ENCODE measurements at regions of chr2 and their contacts with region 1.

Region 1: DNA sequence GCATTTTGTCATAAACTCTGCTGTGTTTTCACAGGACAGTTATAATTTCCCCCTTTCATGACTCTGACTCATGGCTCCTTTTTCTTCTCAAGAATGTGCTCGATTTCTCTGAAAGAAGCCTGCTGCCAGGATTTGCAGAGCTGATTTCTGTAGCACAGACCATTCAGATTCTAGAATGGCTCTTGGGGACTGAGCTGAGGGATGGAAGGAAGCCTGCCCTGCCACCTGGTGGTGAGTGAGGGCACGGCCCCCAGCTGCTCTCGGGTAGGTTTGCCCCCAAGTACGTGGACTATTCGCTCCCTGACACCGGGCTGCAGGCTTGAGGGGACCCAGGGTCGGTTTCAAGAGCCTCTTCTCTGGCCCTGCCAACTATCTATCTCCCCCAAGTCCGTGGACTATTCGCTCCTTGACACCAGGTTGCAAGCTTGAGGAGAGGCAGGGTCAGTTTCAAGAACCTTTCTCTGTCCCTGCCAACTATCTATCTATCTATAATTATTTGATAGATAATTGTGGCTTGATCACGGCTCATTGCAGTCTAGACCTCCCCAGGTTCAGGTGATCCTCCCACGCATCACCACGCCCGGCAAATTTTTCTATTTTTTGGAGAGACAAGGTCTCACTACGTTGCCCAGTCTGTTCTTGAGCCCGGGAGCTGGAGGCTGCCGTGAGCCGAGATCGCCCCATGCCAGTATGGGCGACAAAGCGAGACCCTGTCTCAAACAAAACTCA is 1.4 kb upstream of the SMYD5 start:
- DNase-seq: peak; percentile 78
- ATAC-seq: peak; percentile 76
- H3K4me3 ChIP-seq: peak overlapping the region; percentile 50 to 93 (median 86)
- H3K27ac ChIP-seq: peak overlapping the region; percentile 92
- H3K4me1 ChIP-seq: peaks cover 72% of the 10 kb centered on the region
- H3K27me3 ChIP-seq: no peaks in the 10 kb centered on the region
- CTCF ChIP-seq: peak; percentile 98
- EP300 ChIP-seq: no peak
- POLR2A ChIP-seq: peak in 1 of 2 experiments; percentile 36; a peak in 1 of 4 replicates
- RAD21 ChIP-seq: peak; percentile 89

Region 2: DNA sequence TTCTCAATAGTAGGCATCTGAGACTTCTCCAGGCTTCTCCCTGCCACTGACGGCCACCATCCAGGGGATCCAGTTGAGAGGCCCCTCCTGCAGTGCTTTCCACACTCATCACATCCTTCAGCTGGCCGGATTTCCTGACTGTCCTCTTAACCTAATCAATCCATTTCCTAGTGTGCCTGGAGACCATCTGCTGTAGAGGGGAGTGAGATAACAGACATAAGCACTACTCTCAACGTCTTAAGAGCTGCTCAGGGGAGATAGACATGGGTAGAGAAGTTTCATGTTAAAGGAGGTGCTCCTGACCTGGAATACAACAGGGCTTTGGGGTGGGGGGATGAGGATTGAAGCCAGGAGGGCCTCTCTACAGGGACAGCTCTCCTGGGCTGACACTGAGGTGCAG is 311.2 kb before region 1 on chr2:
- CTCF ChIA-PET with region 1: no interaction called
- POLR2A ChIA-PET with region 1: no interaction called
- in situ Hi-C with region 1: no loop called
- intact Hi-C with region 1: no loop called
- DNase-seq: no peak
- ATAC-seq: no peak
- H3K4me3 ChIP-seq: no peak overlapping the region
- H3K27ac ChIP-seq: no peak overlapping the region
- H3K4me1 ChIP-seq: no peaks in the 10 kb centered on the region
- H3K27me3 ChIP-seq: peaks cover 6 to 60% of the 10 kb centered on the region in 2 experiments; a peak in 4 of 5 replicates
- CTCF ChIP-seq: no peak
- EP300 ChIP-seq: no peak
- POLR2A ChIP-seq: no peak
- RAD21 ChIP-seq: no peak

Region 3: DNA sequence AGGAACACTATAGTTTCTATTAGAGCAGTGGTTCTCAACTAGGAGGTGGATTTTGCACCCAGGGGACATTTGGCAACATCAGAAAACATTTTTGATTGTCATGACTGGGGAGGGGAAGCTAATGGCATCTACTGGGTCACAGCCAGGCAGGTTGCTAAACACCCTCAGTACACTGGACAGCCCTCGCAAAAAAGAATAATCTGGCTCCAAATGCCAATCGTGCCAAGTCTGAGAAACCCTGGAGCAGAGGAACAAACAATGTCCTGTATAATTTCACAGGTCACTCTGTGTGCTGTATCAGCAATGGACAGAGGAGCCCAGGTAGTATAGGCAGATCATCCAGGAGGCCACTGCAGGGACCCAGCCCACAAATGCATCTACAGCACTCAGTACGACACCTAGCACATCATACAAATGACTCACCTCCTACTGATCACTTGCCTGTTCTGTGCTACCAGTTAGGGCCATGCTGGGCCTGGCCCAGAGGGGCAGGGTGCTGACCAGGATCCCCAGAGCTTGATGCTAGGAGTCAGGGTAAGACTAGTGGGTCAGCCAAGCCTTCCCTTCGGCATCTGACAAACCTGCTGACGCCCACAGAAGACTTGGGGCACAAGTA is 178.7 kb before region 1 on chr2:
- CTCF ChIA-PET with region 1: no interaction called
- POLR2A ChIA-PET with region 1: interaction called, 15 read pairs
- in situ Hi-C with region 1: no loop called
- intact Hi-C with region 1: no loop called
- DNase-seq: peak; percentile 61
- ATAC-seq: peak; percentile 17
- H3K4me3 ChIP-seq: no peak overlapping the region
- H3K27ac ChIP-seq: peak overlapping the region; percentile 97
- H3K4me1 ChIP-seq: peaks cover 72% of the 10 kb centered on the region
- H3K27me3 ChIP-seq: no peaks in the 10 kb centered on the region
- CTCF ChIP-seq: no peak
- EP300 ChIP-seq: no peak
- POLR2A ChIP-seq: no peak
- RAD21 ChIP-seq: no peak

Region 4: DNA sequence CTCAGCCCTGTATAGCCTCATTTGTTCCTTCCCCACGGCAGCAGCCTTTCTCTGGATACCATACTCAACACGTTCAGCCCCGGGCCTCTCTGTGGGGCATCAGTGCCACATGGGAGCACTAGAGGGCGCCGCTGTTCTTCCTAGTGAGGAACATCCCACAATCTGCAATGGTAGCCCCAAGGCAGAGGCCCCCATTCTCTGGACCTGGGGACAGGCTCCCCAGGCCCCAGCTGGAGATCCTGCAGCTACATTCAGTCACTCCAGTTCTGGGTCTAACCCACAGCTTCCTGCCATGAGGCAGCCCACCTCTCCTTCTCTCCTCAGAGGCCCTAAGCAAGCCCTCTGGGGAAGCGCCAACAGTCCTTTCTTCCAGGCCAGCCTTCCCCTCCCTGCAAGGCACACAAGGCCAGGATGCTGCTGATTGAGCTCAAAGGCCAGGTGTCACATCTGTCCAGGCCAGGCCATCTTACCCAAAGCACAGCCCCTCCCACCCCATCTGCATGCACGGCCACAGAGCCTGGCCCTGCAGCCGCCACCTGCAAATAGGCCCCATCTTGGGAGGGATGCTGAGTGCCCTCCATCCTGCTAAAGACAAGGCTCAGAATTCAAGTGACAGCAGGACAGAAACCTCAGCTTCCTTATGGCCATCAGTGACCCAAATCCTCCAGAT is 126.8 kb before region 1 on chr2:
- CTCF ChIA-PET with region 1: interaction called, 11 read pairs
- POLR2A ChIA-PET with region 1: interaction called, 4 read pairs
- in situ Hi-C with region 1: no loop called
- intact Hi-C with region 1: loop called (anchors 1 kb)
- DNase-seq: peak; percentile 74
- ATAC-seq: peak; percentile 90
- H3K4me3 ChIP-seq: no peak overlapping the region
- H3K27ac ChIP-seq: no peak overlapping the region
- H3K4me1 ChIP-seq: peaks cover 16% of the 10 kb centered on the region
- H3K27me3 ChIP-seq: no peaks in the 10 kb centered on the region
- CTCF ChIP-seq: peak; percentile 99
- EP300 ChIP-seq: no peak
- POLR2A ChIP-seq: no peak
- RAD21 ChIP-seq: peak; percentile 99

Region 5: GRCh38 chr2:73112913-73113633 is 99.5 kb before region 1 on chr2 and contains the start of gene RAB11FIP5:
- CTCF ChIA-PET with region 1: no interaction called
- POLR2A ChIA-PET with region 1: interaction called, 11 read pairs
- in situ Hi-C with region 1: no loop called
- intact Hi-C with region 1: no loop called
- DNase-seq: peak; percentile 57
- ATAC-seq: peak; percentile 82
- H3K4me3 ChIP-seq: peak within 1 kb of the TSS; percentile 64 to 92 (median 85)
- H3K27ac ChIP-seq: peak within 1 kb of the TSS; percentile 54
- H3K4me1 ChIP-seq: peaks cover 51% of the 10 kb centered on the region
- H3K27me3 ChIP-seq: no peaks in the 10 kb centered on the region; a peak in 2 of 5 replicates
- CTCF ChIP-seq: peak; percentile 26
- EP300 ChIP-seq: no peak
- POLR2A ChIP-seq: peak; percentile 59 to 66; a peak in 3 of 4 replicates
- RAD21 ChIP-seq: peak; percentile 47
- total RNA-seq, gene RAB11FIP5: 8.7 and 9.4 TPM in 2 replicates

Region 6: GRCh38 chr2:73134471-73134870 is 78.1 kb before region 1 on chr2:
- CTCF ChIA-PET with region 1: no interaction called
- POLR2A ChIA-PET with region 1: no interaction called
- in situ Hi-C with region 1: no loop called
- intact Hi-C with region 1: no loop called
- DNase-seq: no peak
- ATAC-seq: no peak
- H3K4me3 ChIP-seq: no peak overlapping the region
- H3K27ac ChIP-seq: no peak overlapping the region
- H3K4me1 ChIP-seq: no peaks in the 10 kb centered on the region
- H3K27me3 ChIP-seq: peaks cover 0 to 8% of the 10 kb centered on the region in 2 experiments; a peak in 2 of 5 replicates
- CTCF ChIP-seq: no peak
- EP300 ChIP-seq: no peak
- POLR2A ChIP-seq: no peak
- RAD21 ChIP-seq: no peak

Region 7: GRCh38 chr2:73187549-73187948 is 25.1 kb before region 1 on chr2:
- CTCF ChIA-PET with region 1: no interaction called
- POLR2A ChIA-PET with region 1: interaction called, 93 read pairs
- in situ Hi-C with region 1: no loop called
- intact Hi-C with region 1: loop called (anchors 2 kb)
- DNase-seq: no peak
- ATAC-seq: no peak
- H3K4me3 ChIP-seq: no peak overlapping the region
- H3K27ac ChIP-seq: no peak overlapping the region
- H3K4me1 ChIP-seq: peaks cover 49% of the 10 kb centered on the region
- H3K27me3 ChIP-seq: 0 out of 5 replicates have a peak, but pooled peaks cover 0 to 4% of the 10 kb centered on the region in 2 experiments
- CTCF ChIP-seq: no peak
- EP300 ChIP-seq: no peak
- POLR2A ChIP-seq: no peak
- RAD21 ChIP-seq: no peak

Region 8: GRCh38 chr2:73233154-73233931 is 20.7 kb after region 1 on chr2 and contains the start of gene PRADC1:
- CTCF ChIA-PET with region 1: no interaction called
- POLR2A ChIA-PET with region 1: interaction called, 125 read pairs
- in situ Hi-C with region 1: no loop called
- intact Hi-C with region 1: loop called (anchors 1 kb)
- DNase-seq: peak; percentile 100
- ATAC-seq: peak; percentile 90
- H3K4me3 ChIP-seq: peak within 1 kb of the TSS; percentile 84 to 97 (median 89)
- H3K27ac ChIP-seq: peak within 1 kb of the TSS; percentile 78
- H3K4me1 ChIP-seq: peaks cover 39% of the 10 kb centered on the region
- H3K27me3 ChIP-seq: peaks cover 0 to 6% of the 10 kb centered on the region in 2 experiments; a peak in 1 of 5 replicates
- CTCF ChIP-seq: peak; percentile 27; the same call in 1 of the 2 replicates
- EP300 ChIP-seq: peak in 1 of 2 experiments; percentile 42; a peak in 1 of 4 replicates
- POLR2A ChIP-seq: peak; percentile 23 to 80; a peak in 2 of 4 replicates
- RAD21 ChIP-seq: 0 out of 2 replicates have a peak, but pooled peaks have one; percentile 25
- total RNA-seq, gene PRADC1: 30.0 and 37.2 TPM in 2 replicates

Region 9: DNA sequence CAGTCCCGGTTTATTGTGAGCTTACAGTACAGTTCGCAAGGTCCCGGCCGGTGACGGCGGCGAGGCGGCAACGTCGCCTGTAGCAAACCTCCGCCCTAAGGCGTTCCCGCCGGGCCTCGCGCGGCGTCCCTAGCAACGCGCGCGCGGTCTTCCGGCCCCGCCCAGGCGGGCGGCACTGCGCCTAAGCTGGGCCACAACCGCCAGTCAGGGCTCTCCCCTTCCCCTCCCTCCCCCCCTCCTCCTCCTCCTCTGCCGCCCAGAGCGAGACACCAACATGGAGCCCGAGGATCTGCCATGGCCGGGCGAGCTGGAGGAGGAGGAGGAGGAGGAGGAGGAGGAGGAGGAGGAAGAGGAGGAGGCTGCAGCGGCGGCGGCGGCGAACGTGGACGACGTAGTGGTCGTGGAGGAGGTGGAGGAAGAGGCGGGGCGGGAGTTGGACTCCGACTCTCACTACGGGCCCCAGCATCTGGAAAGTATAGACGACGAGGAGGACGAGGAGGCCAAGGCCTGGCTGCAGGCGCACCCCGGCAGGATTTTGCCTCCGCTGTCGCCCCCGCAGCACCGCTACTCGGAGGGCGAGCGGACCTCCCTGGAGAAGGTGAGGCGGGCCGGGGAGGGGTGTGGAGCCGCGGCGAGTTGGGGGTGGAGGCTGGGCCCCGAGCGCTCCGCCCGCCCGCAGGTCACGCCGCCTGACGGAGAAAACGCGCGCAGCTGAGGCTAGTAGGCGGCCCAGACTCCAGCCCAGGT is 173.2 kb after region 1 on chr2 and contains the start of gene ALMS1:
- CTCF ChIA-PET with region 1: no interaction called
- POLR2A ChIA-PET with region 1: interaction called, 5 read pairs
- in situ Hi-C with region 1: no loop called
- intact Hi-C with region 1: loop called (anchors 10 kb)
- DNase-seq: peak; percentile 88
- ATAC-seq: peak; percentile 94
- H3K4me3 ChIP-seq: peak within 1 kb of the TSS; percentile 85 to 100 (median 99)
- H3K27ac ChIP-seq: peak within 1 kb of the TSS; percentile 88
- H3K4me1 ChIP-seq: peaks cover 37% of the 10 kb centered on the region
- H3K27me3 ChIP-seq: peaks cover 0 to 18% of the 10 kb centered on the region in 2 experiments; a peak in 3 of 5 replicates
- CTCF ChIP-seq: peak; percentile 66
- EP300 ChIP-seq: peak in 1 of 2 experiments; percentile 34; a peak in 1 of 4 replicates
- POLR2A ChIP-seq: peak; percentile 45 to 76
- RAD21 ChIP-seq: 0 out of 2 replicates have a peak, but pooled peaks have one; percentile 50
- total RNA-seq, gene ALMS1: 21.2 and 28.8 TPM in 2 replicates